ENCODE measurements at regions of chr17 and their contacts with region 1.

Region 1: GRCh38 chr17:8785547-8786413 is 13.4 kb downstream of the MFSD6L start:
- DNase-seq: peak; percentile 77
- ATAC-seq: no peak
- H3K4me3 Mint-ChIP-seq: no peak overlapping the region
- H3K27ac Mint-ChIP-seq: no peak overlapping the region
- H3K4me1 Mint-ChIP-seq: peaks cover 5% of the 10 kb centered on the region
- H3K27me3 Mint-ChIP-seq: no peaks in the 10 kb centered on the region
- CTCF ChIP-seq: peak; percentile 93

Region 2: GRCh38 chr17:8409966-8410864 is 375.6 kb before region 1 on chr17:
- CTCF ChIA-PET with region 1: interaction called, 20 read pairs
- POLR2A ChIA-PET with region 1: no interaction called
- intact Hi-C with region 1: no loop called
- DNase-seq: peak; percentile 84
- ATAC-seq: peak; percentile 85
- H3K4me3 Mint-ChIP-seq: no peak overlapping the region
- H3K27ac Mint-ChIP-seq: no peak overlapping the region
- H3K4me1 Mint-ChIP-seq: peaks cover 13% of the 10 kb centered on the region
- H3K27me3 Mint-ChIP-seq: peaks cover 9% of the 10 kb centered on the region
- CTCF ChIP-seq: peak; percentile 96

Region 3: GRCh38 chr17:8753136-8753975 is 32.4 kb before region 1 on chr17:
- CTCF ChIA-PET with region 1: interaction called, 27 read pairs
- POLR2A ChIA-PET with region 1: no interaction called
- intact Hi-C with region 1: no loop called
- DNase-seq: no peak
- ATAC-seq: no peak
- H3K4me3 Mint-ChIP-seq: no peak overlapping the region
- H3K27ac Mint-ChIP-seq: no peak overlapping the region
- H3K4me1 Mint-ChIP-seq: no peaks in the 10 kb centered on the region
- H3K27me3 Mint-ChIP-seq: peaks cover 3% of the 10 kb centered on the region
- CTCF ChIP-seq: no peak

Region 4: DNA sequence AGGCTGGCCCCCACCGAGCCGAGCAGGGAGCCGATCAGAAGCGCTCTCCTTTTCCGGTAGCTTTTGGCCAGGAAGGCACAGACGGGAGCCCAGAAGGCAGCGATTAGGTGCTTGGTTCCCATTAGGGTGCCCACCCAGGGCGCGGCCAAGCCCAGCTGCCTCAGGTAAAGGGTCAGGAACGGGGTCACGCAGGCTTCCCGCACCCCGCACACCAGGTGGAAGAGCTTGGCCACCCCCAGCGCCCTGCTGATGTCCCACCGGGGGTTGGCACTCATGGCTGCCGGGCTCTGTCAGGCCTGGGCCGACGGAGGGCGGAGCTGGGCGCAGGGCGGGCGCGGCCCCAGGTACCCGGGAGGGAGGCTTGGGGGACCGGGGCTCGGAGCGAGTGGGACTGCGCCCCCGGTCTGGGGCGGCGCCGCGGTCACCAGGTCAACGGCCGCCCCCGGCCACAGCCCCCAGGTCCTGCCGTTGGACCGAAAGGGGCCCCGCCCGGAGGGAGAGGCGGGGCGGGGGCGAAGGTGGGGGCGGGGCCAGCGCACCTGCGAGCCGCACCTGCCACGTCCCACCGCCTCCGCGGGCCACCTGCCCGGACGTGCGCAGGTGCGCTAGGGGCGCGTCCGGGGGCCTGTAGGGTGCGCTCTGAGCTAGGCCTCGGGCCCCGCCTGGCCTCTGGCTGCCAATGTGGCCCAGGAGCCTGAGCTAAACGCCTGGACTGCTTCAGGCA is 13.2 kb after region 1 on chr17 and contains the start of gene MFSD6L:
- CTCF ChIA-PET with region 1: interaction called, 20 read pairs
- POLR2A ChIA-PET with region 1: no interaction called
- intact Hi-C with region 1: no loop called
- DNase-seq: peak; percentile 28
- ATAC-seq: no peak
- H3K4me3 Mint-ChIP-seq: no peak within 1 kb of the TSS
- H3K27ac Mint-ChIP-seq: no peak within 1 kb of the TSS
- H3K4me1 Mint-ChIP-seq: no peaks in the 10 kb centered on the region
- H3K27me3 Mint-ChIP-seq: no peaks in the 10 kb centered on the region
- CTCF ChIP-seq: peak; percentile 14
- total RNA-seq, gene MFSD6L: 0.20 to 0.22 TPM

Region 5: GRCh38 chr17:8826808-8827435 is 41.1 kb after region 1 on chr17:
- CTCF ChIA-PET with region 1: interaction called, 19 read pairs
- POLR2A ChIA-PET with region 1: no interaction called
- intact Hi-C with region 1: no loop called
- DNase-seq: no peak
- ATAC-seq: no peak
- H3K4me3 Mint-ChIP-seq: no peak overlapping the region
- H3K27ac Mint-ChIP-seq: no peak overlapping the region
- H3K4me1 Mint-ChIP-seq: no peaks in the 10 kb centered on the region
- H3K27me3 Mint-ChIP-seq: no peaks in the 10 kb centered on the region
- CTCF ChIP-seq: no peak

Region 6: GRCh38 chr17:8997994-8998628 is 212.3 kb after region 1 on chr17:
- CTCF ChIA-PET with region 1: interaction called, 14 read pairs
- POLR2A ChIA-PET with region 1: no interaction called
- intact Hi-C with region 1: no loop called
- DNase-seq: peak; percentile 86
- ATAC-seq: peak; percentile 72
- H3K4me3 Mint-ChIP-seq: no peak overlapping the region
- H3K27ac Mint-ChIP-seq: no peak overlapping the region
- H3K4me1 Mint-ChIP-seq: peaks cover 17% of the 10 kb centered on the region
- H3K27me3 Mint-ChIP-seq: peaks cover 23% of the 10 kb centered on the region
- CTCF ChIP-seq: peak; percentile 95